Naive thymus-derived CD4-positive, alpha-beta T cell (primary cell): ENCODE measurements at regions of chr2 and their contacts with region 1.

Region 1: GRCh38 chr2:218269899-218270720 is at the starts of genes AAMP and PNKD:
- DNase-seq: peak; percentile 99 to 100 (median 100)
- ATAC-seq: peak; percentile 95
- H3K4me3 ChIP-seq: peak within 1 kb of the TSS; percentile 96
- H3K4me3 Mint-ChIP-seq: peak within 1 kb of the TSS; percentile 84 to 99 (median 93)
- H3K27ac ChIP-seq: peak within 1 kb of the TSS; percentile 92
- H3K27ac Mint-ChIP-seq: peak within 1 kb of the TSS; percentile 82 to 95 (median 92)
- H3K4me1 ChIP-seq: peaks cover 27 to 30% of the 10 kb centered on the region in 2 donors
- H3K4me1 Mint-ChIP-seq: peaks cover 30 to 59% (median 51%) of the 10 kb centered on the region in 7 donors
- H3K27me3 ChIP-seq: no peaks in the 10 kb centered on the region
- H3K27me3 Mint-ChIP-seq: no peaks in the 10 kb centered on the region
- total RNA-seq, gene AAMP: 54.1 to 67.0 (median 61.2) TPM
- total RNA-seq, gene PNKD: 18.5 to 38.4 (median 25.2) TPM

Region 2: GRCh38 chr2:218216674-218217359 is 53.3 kb before region 1 on chr2 and contains the start of gene ARPC2:
- CTCF ChIA-PET with region 1: interaction called, 6 read pairs
- POLR2A ChIA-PET with region 1: interaction called, 9 read pairs
- intact Hi-C with region 1: loop called (anchors 1 kb)
- DNase-seq: peak; percentile 91 to 97 (median 95)
- ATAC-seq: peak; percentile 90
- H3K4me3 ChIP-seq: peak within 1 kb of the TSS; percentile 90
- H3K4me3 Mint-ChIP-seq: peak within 1 kb of the TSS; percentile 90 to 97 (median 94)
- H3K27ac ChIP-seq: peak within 1 kb of the TSS; percentile 99
- H3K27ac Mint-ChIP-seq: peak within 1 kb of the TSS; percentile 94 to 98 (median 97)
- H3K4me1 ChIP-seq: peaks cover 25 to 33% of the 10 kb centered on the region in 2 donors
- H3K4me1 Mint-ChIP-seq: peaks cover 31 to 48% (median 42%) of the 10 kb centered on the region in 7 donors
- H3K27me3 ChIP-seq: no peaks in the 10 kb centered on the region
- H3K27me3 Mint-ChIP-seq: peaks cover 0 to 6% (median 0%) of the 10 kb centered on the region in 5 donors
- total RNA-seq, gene ARPC2: 330 to 694 (median 368) TPM

Region 3: GRCh38 chr2:218301176-218301819 is 31.2 kb after region 1 on chr2:
- CTCF ChIA-PET with region 1: interaction called, 188 read pairs
- POLR2A ChIA-PET with region 1: interaction called, 43 read pairs
- intact Hi-C with region 1: loop called (anchors 1 kb)
- DNase-seq: peak; percentile 61 to 92 (median 84)
- ATAC-seq: peak; percentile 99
- H3K4me3 ChIP-seq: no peak overlapping the region
- H3K4me3 Mint-ChIP-seq: no peak overlapping the region
- H3K27ac ChIP-seq: no peak overlapping the region
- H3K27ac Mint-ChIP-seq: peak overlapping the region in 8 of 9 donors; percentile 34 to 80 (median 64)
- H3K4me1 ChIP-seq: no peaks in the 10 kb centered on the region
- H3K4me1 Mint-ChIP-seq: peaks cover 3 to 8% (median 7%) of the 10 kb centered on the region in 7 donors
- H3K27me3 ChIP-seq: no peaks in the 10 kb centered on the region
- H3K27me3 Mint-ChIP-seq: peaks cover 0 to 4% (median 0%) of the 10 kb centered on the region in 5 donors

Region 4: DNA sequence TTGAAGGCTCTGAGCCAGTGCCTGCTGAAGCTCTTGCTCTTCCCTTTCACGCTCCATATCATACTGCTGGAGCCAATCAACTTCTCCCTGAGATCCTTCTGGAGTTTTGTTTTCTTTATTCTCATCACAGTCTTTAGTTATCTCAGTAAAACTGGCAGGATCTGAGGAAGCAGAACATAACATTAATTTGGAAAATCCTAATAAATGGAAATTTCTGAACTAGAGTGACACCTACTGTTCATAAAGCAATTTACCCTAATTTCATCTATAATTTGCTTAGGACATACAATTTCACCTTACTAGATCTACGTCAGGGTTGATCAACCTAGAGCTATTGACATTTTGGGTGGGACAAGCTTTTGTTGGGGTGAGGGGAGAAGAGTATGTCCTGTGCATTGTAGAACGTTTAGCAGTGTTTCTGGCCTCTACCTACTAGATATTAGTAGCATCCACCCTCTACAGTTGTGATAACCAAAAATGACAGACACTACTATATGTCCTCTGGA is 196.0 kb after region 1 on chr2:
- CTCF ChIA-PET with region 1: interaction called, 5 read pairs
- POLR2A ChIA-PET with region 1: no interaction called
- intact Hi-C with region 1: loop called in 1 of 2 experiments (anchors 1 kb)
- DNase-seq: peak in 3 of 9 donors; percentile 9 to 24 (median 23)
- ATAC-seq: peak; percentile 45
- H3K4me3 ChIP-seq: no peak overlapping the region
- H3K4me3 Mint-ChIP-seq: no peak overlapping the region
- H3K27ac ChIP-seq: no peak overlapping the region
- H3K27ac Mint-ChIP-seq: peak overlapping the region in 2 of 9 donors; percentile 3 to 62
- H3K4me1 ChIP-seq: peaks cover 0 to 4% of the 10 kb centered on the region in 2 donors
- H3K4me1 Mint-ChIP-seq: peaks cover 5 to 10% (median 9%) of the 10 kb centered on the region in 7 donors
- H3K27me3 ChIP-seq: no peaks in the 10 kb centered on the region
- H3K27me3 Mint-ChIP-seq: no peaks in the 10 kb centered on the region

Region 5: GRCh38 chr2:218671654-218672566 is 401.8 kb after region 1 on chr2 and contains the starts of genes RNF25 and STK36:
- CTCF ChIA-PET with region 1: interaction called, 3 read pairs
- POLR2A ChIA-PET with region 1: no interaction called
- intact Hi-C with region 1: loop called in 1 of 2 experiments (anchors 1 kb)
- DNase-seq: peak; percentile 60 to 86 (median 79)
- ATAC-seq: peak; percentile 96
- H3K4me3 ChIP-seq: peak within 1 kb of the TSS; percentile 81
- H3K4me3 Mint-ChIP-seq: peak within 1 kb of the TSS; percentile 88 to 100 (median 98)
- H3K27ac ChIP-seq: peak within 1 kb of the TSS; percentile 84
- H3K27ac Mint-ChIP-seq: peak within 1 kb of the TSS; percentile 90 to 98 (median 96)
- H3K4me1 ChIP-seq: peaks cover 9 to 15% of the 10 kb centered on the region in 2 donors
- H3K4me1 Mint-ChIP-seq: peaks cover 14 to 29% (median 24%) of the 10 kb centered on the region in 7 donors
- H3K27me3 ChIP-seq: no peaks in the 10 kb centered on the region
- H3K27me3 Mint-ChIP-seq: no peaks in the 10 kb centered on the region
- total RNA-seq, gene RNF25: 12.6 to 33.4 (median 28.3) TPM
- total RNA-seq, gene STK36: 18.9 to 28.1 (median 19.7) TPM

Region 6: GRCh38 chr2:219218732-219219701 is 948.9 kb after region 1 on chr2 and contains the start of gene ABCB6:
- CTCF ChIA-PET with region 1: no interaction called
- POLR2A ChIA-PET with region 1: no interaction called
- intact Hi-C with region 1: no loop called
- DNase-seq: peak; percentile 72 to 90 (median 85)
- ATAC-seq: peak; percentile 92
- H3K4me3 ChIP-seq: peak within 1 kb of the TSS; percentile 60
- H3K4me3 Mint-ChIP-seq: peak within 1 kb of the TSS; percentile 78 to 89 (median 82)
- H3K27ac ChIP-seq: peak within 1 kb of the TSS; percentile 65
- H3K27ac Mint-ChIP-seq: peak within 1 kb of the TSS; percentile 61 to 86 (median 79)
- H3K4me1 ChIP-seq: peaks cover 13 to 14% of the 10 kb centered on the region in 2 donors
- H3K4me1 Mint-ChIP-seq: peaks cover 0 to 29% (median 24%) of the 10 kb centered on the region in 7 donors
- H3K27me3 ChIP-seq: no peaks in the 10 kb centered on the region
- H3K27me3 Mint-ChIP-seq: no peaks in the 10 kb centered on the region
- total RNA-seq, gene ABCB6: 4.1 to 30.2 (median 8.3) TPM

Region 7: GRCh38 chr2:219388127-219388844 is 1118.2 kb after region 1 on chr2:
- CTCF ChIA-PET with region 1: no interaction called
- POLR2A ChIA-PET with region 1: no interaction called
- intact Hi-C with region 1: loop called in 1 of 2 experiments (anchors 1 kb)
- DNase-seq: peak; percentile 97 to 100 (median 98)
- ATAC-seq: peak; percentile 87
- H3K4me3 ChIP-seq: peak overlapping the region; percentile 38
- H3K4me3 Mint-ChIP-seq: peak overlapping the region; percentile 64 to 97 (median 90)
- H3K27ac ChIP-seq: peak overlapping the region; percentile 78
- H3K27ac Mint-ChIP-seq: peak overlapping the region; percentile 73 to 98 (median 91)
- H3K4me1 ChIP-seq: peaks cover 17 to 22% of the 10 kb centered on the region in 2 donors
- H3K4me1 Mint-ChIP-seq: peaks cover 2 to 37% (median 32%) of the 10 kb centered on the region in 7 donors
- H3K27me3 ChIP-seq: no peaks in the 10 kb centered on the region
- H3K27me3 Mint-ChIP-seq: peaks cover 0 to 11% (median 0%) of the 10 kb centered on the region in 5 donors